GM12878 (cell line): ENCODE measurements at regions of chr2 and their contacts with region 1.

Region 1: DNA sequence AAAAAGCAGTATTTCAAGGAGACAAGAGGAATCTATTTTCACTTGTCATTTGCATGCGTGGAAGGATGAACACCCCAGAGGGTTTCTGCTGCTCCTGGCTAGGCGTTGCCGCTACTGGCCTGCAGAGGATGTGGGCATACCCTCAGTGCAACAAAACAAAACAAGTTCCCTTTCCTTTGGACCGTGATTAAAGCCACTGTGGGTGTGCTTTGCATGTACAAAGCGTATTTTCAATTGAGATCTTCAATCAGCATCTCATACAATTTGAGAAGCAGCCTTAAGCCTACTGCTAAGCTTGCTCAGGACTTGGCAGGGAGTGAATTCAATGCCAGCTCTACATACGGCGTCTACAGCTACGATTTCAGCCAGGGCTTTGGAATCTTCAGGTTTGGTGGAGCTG is 298.4 kb downstream of the LPIN1 start:
- DNase-seq: peak; percentile 83
- ATAC-seq: peak; percentile 83
- H3K4me3 ChIP-seq: peak overlapping the region; percentile 34; the same call in 1 of the 2 replicates
- H3K27ac ChIP-seq: peak overlapping the region; percentile 75
- H3K4me1 ChIP-seq: peaks cover 44% of the 10 kb centered on the region
- H3K27me3 ChIP-seq: no peaks in the 10 kb centered on the region
- CTCF ChIP-seq: peak in 1 of 3 experiments; percentile 24; a peak in 1 of 6 replicates
- EP300 ChIP-seq: 0 out of 4 replicates have a peak, but pooled peaks of 1 of the 2 experiments have one; percentile 15
- POLR2A ChIP-seq: no peak
- RAD21 ChIP-seq: no peak

Region 2: DNA sequence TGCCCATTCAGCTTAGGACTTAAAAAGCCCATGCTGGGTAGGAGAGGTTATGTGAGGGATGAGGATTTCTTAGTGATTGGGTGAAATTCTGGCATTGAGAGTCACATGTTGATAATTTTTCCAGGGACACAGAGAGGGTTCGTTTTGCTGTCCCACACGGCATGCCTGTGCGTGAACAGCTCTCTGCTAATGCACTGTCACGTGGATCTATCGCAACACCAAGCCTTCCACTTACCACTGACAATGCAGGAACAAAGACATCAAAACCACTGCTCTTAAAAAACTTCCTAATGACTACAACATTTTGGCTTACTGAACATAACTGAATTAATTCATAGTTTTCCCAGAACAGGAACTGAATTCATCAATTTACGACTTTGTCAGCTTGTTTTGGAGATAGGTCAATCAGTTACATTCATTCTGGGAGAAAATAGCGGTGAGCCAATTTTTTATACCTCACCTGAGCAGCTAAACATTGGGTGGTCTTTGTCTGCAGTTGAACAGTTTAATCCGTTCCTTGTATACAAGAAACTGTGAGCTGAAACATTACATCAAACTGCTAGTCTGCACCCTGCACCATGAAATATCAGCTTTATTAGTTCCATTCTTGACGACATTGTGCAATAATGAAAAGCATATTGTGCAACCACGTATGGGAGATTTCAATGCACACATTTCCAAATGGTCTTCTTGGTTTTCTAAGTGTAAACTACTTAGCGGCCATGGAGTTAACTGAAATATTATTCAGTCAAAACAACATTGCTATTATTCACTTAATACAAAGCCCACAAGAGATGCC is 171.3 kb before region 1 on chr2:
- CTCF ChIA-PET with region 1: interaction called, 3 read pairs
- POLR2A ChIA-PET with region 1: interaction called, 3 read pairs
- RAD21 ChIA-PET with region 1: interaction called, 5 read pairs
- SMC1A ChIA-PET with region 1: interaction called, 12 read pairs
- in situ Hi-C with region 1: no loop called
- intact Hi-C with region 1: no loop called
- DNase-seq: no peak
- ATAC-seq: no peak
- H3K4me3 ChIP-seq: no peak overlapping the region; the same call in 1 of the 2 replicates
- H3K27ac ChIP-seq: no peak overlapping the region; the same call in 1 of the 2 replicates
- H3K4me1 ChIP-seq: peaks cover 12% of the 10 kb centered on the region
- H3K27me3 ChIP-seq: no peaks in the 10 kb centered on the region
- CTCF ChIP-seq: no peak
- EP300 ChIP-seq: no peak
- POLR2A ChIP-seq: no peak
- RAD21 ChIP-seq: no peak

Region 3: GRCh38 chr2:11955314-11955713 is 89.5 kb before region 1 on chr2:
- CTCF ChIA-PET with region 1: no interaction called
- POLR2A ChIA-PET with region 1: no interaction called
- RAD21 ChIA-PET with region 1: no interaction called
- SMC1A ChIA-PET with region 1: no interaction called
- in situ Hi-C with region 1: no loop called
- intact Hi-C with region 1: no loop called
- DNase-seq: no peak
- ATAC-seq: no peak
- H3K4me3 ChIP-seq: no peak overlapping the region
- H3K27ac ChIP-seq: no peak overlapping the region
- H3K4me1 ChIP-seq: no peaks in the 10 kb centered on the region
- H3K27me3 ChIP-seq: no peaks in the 10 kb centered on the region
- CTCF ChIP-seq: no peak
- EP300 ChIP-seq: no peak
- POLR2A ChIP-seq: no peak
- RAD21 ChIP-seq: no peak

Region 4: GRCh38 chr2:12005886-12006681 is 38.8 kb before region 1 on chr2:
- CTCF ChIA-PET with region 1: interaction called, 12 read pairs
- POLR2A ChIA-PET with region 1: interaction called, 4 read pairs
- RAD21 ChIA-PET with region 1: interaction called, 12 read pairs
- SMC1A ChIA-PET with region 1: interaction called, 35 read pairs
- in situ Hi-C with region 1: no loop called
- intact Hi-C with region 1: loop called (anchors 5 kb)
- DNase-seq: peak; percentile 89
- ATAC-seq: peak; percentile 84
- H3K4me3 ChIP-seq: no peak overlapping the region
- H3K27ac ChIP-seq: peak overlapping the region; percentile 71; the same call in 1 of the 2 replicates
- H3K4me1 ChIP-seq: peaks cover 61% of the 10 kb centered on the region
- H3K27me3 ChIP-seq: no peaks in the 10 kb centered on the region
- CTCF ChIP-seq: no peak
- EP300 ChIP-seq: peak; percentile 93 to 95
- POLR2A ChIP-seq: no peak
- RAD21 ChIP-seq: no peak

Region 5: GRCh38 chr2:12032398-12032797 is 12.5 kb before region 1 on chr2:
- CTCF ChIA-PET with region 1: interaction called, 47 read pairs
- POLR2A ChIA-PET with region 1: interaction called, 21 read pairs
- RAD21 ChIA-PET with region 1: interaction called, 27 read pairs
- SMC1A ChIA-PET with region 1: interaction called, 92 read pairs
- in situ Hi-C with region 1: no loop called
- intact Hi-C with region 1: no loop called
- DNase-seq: peak; percentile 71
- ATAC-seq: peak; percentile 91
- H3K4me3 ChIP-seq: no peak overlapping the region
- H3K27ac ChIP-seq: 0 out of 2 replicates have a peak overlapping the region, but pooled peaks have one; percentile 1
- H3K4me1 ChIP-seq: peaks cover 44% of the 10 kb centered on the region
- H3K27me3 ChIP-seq: no peaks in the 10 kb centered on the region
- CTCF ChIP-seq: peak; percentile 36 to 45 (median 45); a peak in 4 of 6 replicates
- EP300 ChIP-seq: 0 out of 4 replicates have a peak, but pooled peaks of 1 of the 2 experiments have one; percentile 9
- POLR2A ChIP-seq: no peak
- RAD21 ChIP-seq: peak; percentile 65

Region 6: GRCh38 chr2:12057436-12058166 is 12.7 kb after region 1 on chr2:
- CTCF ChIA-PET with region 1: interaction called, 9 read pairs
- POLR2A ChIA-PET with region 1: interaction called, 3 read pairs
- RAD21 ChIA-PET with region 1: interaction called, 18 read pairs
- SMC1A ChIA-PET with region 1: interaction called, 18 read pairs
- in situ Hi-C with region 1: no loop called
- intact Hi-C with region 1: no loop called
- DNase-seq: peak; percentile 89
- ATAC-seq: peak; percentile 95
- H3K4me3 ChIP-seq: no peak overlapping the region
- H3K27ac ChIP-seq: peak overlapping the region; percentile 45
- H3K4me1 ChIP-seq: peaks cover 17% of the 10 kb centered on the region
- H3K27me3 ChIP-seq: no peaks in the 10 kb centered on the region
- CTCF ChIP-seq: no peak
- EP300 ChIP-seq: peak; percentile 72 to 74
- POLR2A ChIP-seq: no peak
- RAD21 ChIP-seq: no peak

Region 7: GRCh38 chr2:12071318-12071717 is 26.5 kb after region 1 on chr2:
- CTCF ChIA-PET with region 1: interaction called, 3 read pairs
- POLR2A ChIA-PET with region 1: interaction called, 5 read pairs
- RAD21 ChIA-PET with region 1: interaction called, 7 read pairs
- SMC1A ChIA-PET with region 1: interaction called, 25 read pairs
- in situ Hi-C with region 1: no loop called
- intact Hi-C with region 1: no loop called
- DNase-seq: no peak
- ATAC-seq: peak; percentile 49
- H3K4me3 ChIP-seq: no peak overlapping the region
- H3K27ac ChIP-seq: no peak overlapping the region
- H3K4me1 ChIP-seq: peaks cover 31% of the 10 kb centered on the region
- H3K27me3 ChIP-seq: no peaks in the 10 kb centered on the region
- CTCF ChIP-seq: no peak
- EP300 ChIP-seq: peak; percentile 69 to 83; a peak in 3 of 4 replicates
- POLR2A ChIP-seq: no peak
- RAD21 ChIP-seq: no peak

Region 8: GRCh38 chr2:12212841-12213597 is 168.2 kb after region 1 on chr2:
- CTCF ChIA-PET with region 1: no interaction called
- POLR2A ChIA-PET with region 1: no interaction called
- RAD21 ChIA-PET with region 1: no interaction called
- SMC1A ChIA-PET with region 1: no interaction called
- in situ Hi-C with region 1: no loop called
- intact Hi-C with region 1: no loop called
- DNase-seq: no peak
- ATAC-seq: no peak
- H3K4me3 ChIP-seq: no peak overlapping the region
- H3K27ac ChIP-seq: no peak overlapping the region
- H3K4me1 ChIP-seq: no peaks in the 10 kb centered on the region
- H3K27me3 ChIP-seq: no peaks in the 10 kb centered on the region
- CTCF ChIP-seq: no peak
- EP300 ChIP-seq: no peak
- POLR2A ChIP-seq: no peak
- RAD21 ChIP-seq: no peak

Region 9: DNA sequence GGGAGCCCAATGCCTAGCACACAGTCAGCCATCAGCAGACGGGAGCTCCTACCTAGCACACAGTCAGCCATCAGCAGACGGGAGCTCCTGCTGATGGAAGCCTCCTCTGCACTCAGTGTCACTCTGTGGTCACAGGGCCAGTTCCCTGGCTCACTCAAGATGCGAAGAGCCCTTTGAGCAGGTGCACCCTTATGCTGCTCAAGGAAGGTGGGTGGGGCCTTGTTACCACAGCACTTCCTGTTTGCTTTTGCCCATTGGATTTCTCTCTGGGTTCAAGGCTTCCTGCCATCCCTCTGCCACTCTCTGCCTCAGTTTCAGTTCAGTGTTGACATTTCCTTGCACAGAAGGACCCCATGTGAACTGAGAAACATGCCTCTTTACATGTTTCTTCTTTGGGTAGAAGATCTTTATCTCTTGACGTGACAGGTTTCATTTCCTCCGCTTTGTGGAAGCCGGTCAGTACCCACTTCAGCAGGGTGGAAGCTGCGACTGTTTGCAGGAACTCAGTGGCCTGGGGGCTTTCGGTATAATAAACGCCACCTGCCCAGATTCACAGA is 683.4 kb after region 1 on chr2:
- CTCF ChIA-PET with region 1: no interaction called
- POLR2A ChIA-PET with region 1: no interaction called
- RAD21 ChIA-PET with region 1: no interaction called
- SMC1A ChIA-PET with region 1: no interaction called
- in situ Hi-C with region 1: no loop called
- intact Hi-C with region 1: loop called (anchors 10 kb)
- DNase-seq: peak; percentile 93
- ATAC-seq: peak; percentile 92
- H3K4me3 ChIP-seq: no peak overlapping the region
- H3K27ac ChIP-seq: no peak overlapping the region
- H3K4me1 ChIP-seq: peaks cover 14% of the 10 kb centered on the region
- H3K27me3 ChIP-seq: no peaks in the 10 kb centered on the region
- CTCF ChIP-seq: no peak
- EP300 ChIP-seq: peak in 1 of 2 experiments; percentile 11; a peak in 1 of 4 replicates
- POLR2A ChIP-seq: no peak
- RAD21 ChIP-seq: no peak